CD14-positive monocyte (primary cell): ENCODE measurements at regions of chr2 and their contacts with region 1.

Region 1: DNA sequence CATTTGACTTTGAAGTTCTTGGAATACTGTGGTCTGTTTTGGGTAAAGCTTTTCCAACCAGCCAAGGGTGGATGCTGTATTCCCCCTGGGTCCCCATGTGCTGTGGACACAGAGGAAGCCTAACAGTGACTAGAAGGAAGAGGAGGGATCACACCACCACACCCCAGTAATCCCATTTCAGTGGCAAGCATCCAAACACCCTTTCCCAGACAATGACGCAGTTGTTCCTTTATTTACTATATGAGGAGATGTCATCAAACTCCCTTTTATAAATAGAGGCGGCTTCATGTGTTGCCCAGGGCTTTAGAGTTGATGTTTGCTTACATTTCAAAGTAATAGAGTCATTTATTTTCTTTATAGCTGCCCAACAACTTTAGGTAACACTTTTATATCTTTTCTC is 959.4 kb upstream of the GYPC start:
- DNase-seq: no peak
- H3K4me3 ChIP-seq: no peak overlapping the region
- H3K4me3 Mint-ChIP-seq: no peak overlapping the region
- H3K27ac ChIP-seq: no peak overlapping the region
- H3K27ac Mint-ChIP-seq: no peak overlapping the region
- H3K4me1 ChIP-seq: no peaks in the 10 kb centered on the region
- H3K4me1 Mint-ChIP-seq: no peaks in the 10 kb centered on the region
- H3K27me3 ChIP-seq: no peaks in the 10 kb centered on the region
- H3K27me3 Mint-ChIP-seq: no peaks in the 10 kb centered on the region
- CTCF ChIP-seq: no peak

Region 2: DNA sequence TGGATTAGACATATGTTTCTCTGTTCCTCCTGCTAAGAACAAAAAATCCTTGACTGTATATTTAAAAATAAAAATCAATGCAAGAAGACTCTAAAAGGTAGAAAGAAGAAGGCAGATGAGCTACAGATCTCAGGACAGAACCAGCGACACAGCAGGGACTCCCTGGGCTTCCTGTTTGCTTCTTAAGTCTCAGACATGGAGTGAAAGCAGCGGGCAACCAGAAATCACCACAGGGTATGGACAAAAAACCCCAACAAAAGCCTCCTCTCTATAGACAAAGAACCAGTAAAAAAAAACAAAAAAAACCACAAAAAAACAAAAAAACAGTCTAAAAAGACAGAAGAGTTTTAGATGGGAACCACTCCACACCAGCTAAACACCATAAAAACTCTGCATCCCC is 11.6 kb before region 1 on chr2:
- intact Hi-C with region 1: loop called in 1 of 2 experiments (anchors 1 kb)
- DNase-seq: no peak
- H3K4me3 ChIP-seq: no peak overlapping the region
- H3K4me3 Mint-ChIP-seq: no peak overlapping the region
- H3K27ac ChIP-seq: no peak overlapping the region
- H3K27ac Mint-ChIP-seq: no peak overlapping the region
- H3K4me1 ChIP-seq: no peaks in the 10 kb centered on the region
- H3K4me1 Mint-ChIP-seq: no peaks in the 10 kb centered on the region
- H3K27me3 ChIP-seq: no peaks in the 10 kb centered on the region
- H3K27me3 Mint-ChIP-seq: no peaks in the 10 kb centered on the region
- CTCF ChIP-seq: no peak

Region 3: DNA sequence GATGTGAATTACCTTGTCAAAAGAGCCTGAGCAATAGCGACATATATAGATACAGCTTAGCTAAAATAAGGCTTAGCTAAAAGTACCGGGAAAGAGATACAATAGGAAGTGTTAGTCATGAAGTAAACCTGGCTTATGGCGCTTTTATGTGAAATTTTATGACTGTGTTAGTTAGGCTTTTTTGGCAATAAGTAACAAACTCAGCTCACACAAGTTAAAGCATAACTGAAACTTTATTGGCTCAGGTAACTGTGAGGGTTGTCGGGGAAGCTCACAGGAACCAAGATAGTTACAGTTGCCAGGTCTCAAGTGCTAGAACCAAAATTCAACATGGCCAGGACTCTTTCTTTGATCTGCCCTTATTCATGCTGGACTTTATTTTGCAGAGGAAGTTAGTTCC is 34.4 kb after region 1 on chr2:
- intact Hi-C with region 1: no loop called
- DNase-seq: no peak
- H3K4me3 ChIP-seq: no peak overlapping the region
- H3K4me3 Mint-ChIP-seq: no peak overlapping the region
- H3K27ac ChIP-seq: no peak overlapping the region
- H3K27ac Mint-ChIP-seq: no peak overlapping the region
- H3K4me1 ChIP-seq: no peaks in the 10 kb centered on the region
- H3K4me1 Mint-ChIP-seq: no peaks in the 10 kb centered on the region
- H3K27me3 ChIP-seq: no peaks in the 10 kb centered on the region
- H3K27me3 Mint-ChIP-seq: no peaks in the 10 kb centered on the region
- CTCF ChIP-seq: no peak

Region 4: GRCh38 chr2:126449677-126450076 is 753.1 kb after region 1 on chr2:
- intact Hi-C with region 1: no loop called
- DNase-seq: no peak
- H3K4me3 ChIP-seq: no peak overlapping the region
- H3K4me3 Mint-ChIP-seq: no peak overlapping the region
- H3K27ac ChIP-seq: no peak overlapping the region
- H3K27ac Mint-ChIP-seq: no peak overlapping the region
- H3K4me1 ChIP-seq: no peaks in the 10 kb centered on the region
- H3K4me1 Mint-ChIP-seq: no peaks in the 10 kb centered on the region
- H3K27me3 ChIP-seq: no peaks in the 10 kb centered on the region
- H3K27me3 Mint-ChIP-seq: peaks cover 0 to 5% (median 4%) of the 10 kb centered on the region in 3 donors
- CTCF ChIP-seq: no peak